BJ (cell line): ENCODE measurements at regions of chr7 and their contacts with region 1.

Region 1: DNA sequence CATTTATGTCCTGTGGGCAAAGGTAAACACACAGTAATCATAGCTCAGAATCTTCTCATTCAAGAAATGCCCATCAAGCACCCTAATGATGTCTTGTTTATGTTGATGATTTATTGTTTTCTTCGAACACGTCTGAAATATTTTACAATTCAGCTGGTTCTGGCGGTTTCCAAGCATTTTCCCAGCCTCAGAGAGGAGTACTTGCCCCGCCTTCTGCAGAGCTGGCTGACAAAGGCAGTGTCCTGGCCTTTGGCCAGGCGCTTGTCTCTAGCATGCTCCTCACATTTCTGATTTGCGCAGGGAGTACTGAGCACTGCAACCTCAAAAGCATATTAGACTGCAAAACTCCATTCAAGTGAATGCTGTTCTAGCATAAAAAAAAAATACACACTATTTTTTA is 314.2 kb upstream of the GNAI1 start:
- DNase-seq: no peak
- H3K4me3 ChIP-seq: no peak overlapping the region
- H3K27me3 ChIP-seq: no peaks in the 10 kb centered on the region
- CTCF ChIP-seq: no peak

Region 2: DNA sequence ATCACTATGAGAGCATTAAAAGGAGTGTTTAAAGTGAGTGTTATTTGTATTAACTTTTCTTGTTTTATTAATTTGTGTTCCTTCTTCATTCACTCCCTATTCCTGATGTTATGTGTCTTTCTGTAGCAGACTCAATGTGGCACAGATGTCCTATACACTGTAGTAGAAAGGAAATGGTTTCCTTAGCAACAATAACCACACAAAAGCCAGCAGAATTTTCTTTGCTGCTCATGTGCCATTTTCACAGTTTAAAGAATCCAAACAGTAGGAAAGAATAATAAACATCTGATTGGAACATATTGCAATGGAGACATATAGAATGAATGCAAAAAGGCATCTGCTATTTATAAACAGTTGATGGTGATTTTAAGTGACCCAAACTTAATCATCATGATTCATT is 1258.2 kb before region 1 on chr7:
- CTCF ChIA-PET with region 1: no interaction called
- POLR2A ChIA-PET with region 1: no interaction called
- DNase-seq: no peak
- H3K4me3 ChIP-seq: no peak overlapping the region
- H3K27me3 ChIP-seq: no peaks in the 10 kb centered on the region
- CTCF ChIP-seq: no peak

Region 3: GRCh38 chr7:79982141-79982770 is 161.9 kb after region 1 on chr7:
- CTCF ChIA-PET with region 1: no interaction called
- POLR2A ChIA-PET with region 1: interaction called, 12 read pairs
- DNase-seq: no peak
- H3K4me3 ChIP-seq: no peak overlapping the region
- H3K27me3 ChIP-seq: no peaks in the 10 kb centered on the region
- CTCF ChIP-seq: no peak